ENCODE measurements at regions of chr15 and their contacts with region 1.

Region 1: GRCh38 chr15:38354315-38354929 is 99.5 kb upstream of the FAM98B start:
- DNase-seq: peak; percentile 16
- ATAC-seq: peak; percentile 65
- H3K4me3 Mint-ChIP-seq: no peak overlapping the region
- H3K27ac Mint-ChIP-seq: no peak overlapping the region
- H3K4me1 Mint-ChIP-seq: no peaks in the 10 kb centered on the region
- H3K27me3 Mint-ChIP-seq: no peaks in the 10 kb centered on the region
- CTCF ChIP-seq: no peak

Region 2: DNA sequence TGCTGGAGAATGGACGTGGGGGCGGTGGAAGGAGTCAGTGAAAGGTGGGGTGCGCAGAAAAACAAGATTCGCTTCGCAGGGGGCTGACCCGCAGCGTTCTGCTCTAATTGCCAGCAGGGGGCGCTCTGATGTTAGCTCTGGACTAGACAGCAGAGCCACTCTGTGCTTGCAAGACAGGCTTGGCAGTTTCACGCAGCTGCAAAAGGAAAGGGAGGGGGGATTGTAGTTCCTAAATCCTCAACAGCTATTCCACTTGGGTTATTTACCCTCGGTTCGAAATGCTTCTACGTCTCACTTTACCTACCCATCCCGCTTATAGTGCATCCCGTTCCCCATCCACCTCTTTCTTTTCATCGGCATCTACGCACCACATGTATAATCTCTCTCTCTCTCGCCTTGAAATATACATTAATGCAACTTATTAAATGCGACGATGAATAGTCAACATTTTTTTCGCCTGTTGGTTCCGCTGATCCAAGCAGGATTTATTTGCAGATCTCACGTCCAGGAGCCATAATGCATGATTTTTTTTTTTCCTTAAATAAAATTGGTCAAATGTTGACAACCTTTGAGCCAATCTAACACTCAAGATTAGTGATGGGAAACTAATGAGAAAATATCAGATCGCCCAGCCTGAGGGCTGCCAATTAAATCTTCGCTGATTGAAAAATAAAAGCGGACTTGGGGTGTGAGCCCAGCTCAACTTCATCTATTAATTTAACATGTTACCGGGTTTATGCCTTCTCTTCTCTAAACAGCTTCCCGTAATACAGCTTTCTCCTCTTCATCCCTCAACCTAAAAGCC is 1470.5 kb before region 1 on chr15:
- CTCF ChIA-PET with region 1: no interaction called
- POLR2A ChIA-PET with region 1: no interaction called
- intact Hi-C with region 1: loop called (anchors 5 kb)
- DNase-seq: peak; percentile 23
- ATAC-seq: no peak
- H3K4me3 Mint-ChIP-seq: no peak overlapping the region
- H3K27ac Mint-ChIP-seq: no peak overlapping the region
- H3K4me1 Mint-ChIP-seq: peaks cover 4% of the 10 kb centered on the region
- H3K27me3 Mint-ChIP-seq: peaks cover 85% of the 10 kb centered on the region
- CTCF ChIP-seq: no peak

Region 3: DNA sequence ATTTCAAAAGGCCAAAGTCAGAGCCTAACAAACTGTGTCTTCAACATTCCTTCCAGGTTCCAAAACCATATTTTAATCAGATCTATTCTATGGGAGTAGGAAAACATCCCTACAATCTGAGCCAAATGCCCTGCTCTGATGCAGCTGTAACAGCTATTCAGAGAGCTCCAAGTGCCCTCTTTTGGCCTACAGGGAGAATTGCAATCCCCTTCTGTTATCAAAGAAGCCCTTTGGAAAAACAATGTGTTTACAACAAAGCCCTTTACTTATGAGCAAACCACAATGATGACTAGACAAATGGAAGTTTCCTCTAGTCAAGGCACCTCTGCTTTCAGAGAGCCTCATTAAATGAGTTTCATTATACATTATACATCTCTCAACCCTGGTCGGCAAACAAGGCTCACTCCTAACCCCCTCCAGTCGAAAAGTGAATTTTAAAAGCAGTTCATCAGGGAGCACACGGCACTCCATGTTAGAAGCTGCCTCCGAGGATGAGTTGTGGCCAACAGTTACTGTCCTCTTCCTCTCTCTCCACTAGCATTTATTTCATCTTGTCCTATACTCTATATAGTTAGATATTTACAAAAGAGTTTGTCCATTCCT is 462.6 kb before region 1 on chr15:
- CTCF ChIA-PET with region 1: no interaction called
- POLR2A ChIA-PET with region 1: no interaction called
- intact Hi-C with region 1: loop called (anchors 10 kb)
- DNase-seq: no peak
- ATAC-seq: no peak
- H3K4me3 Mint-ChIP-seq: no peak overlapping the region
- H3K27ac Mint-ChIP-seq: no peak overlapping the region
- H3K4me1 Mint-ChIP-seq: no peaks in the 10 kb centered on the region
- H3K27me3 Mint-ChIP-seq: peaks cover 8% of the 10 kb centered on the region
- CTCF ChIP-seq: no peak

Region 4: DNA sequence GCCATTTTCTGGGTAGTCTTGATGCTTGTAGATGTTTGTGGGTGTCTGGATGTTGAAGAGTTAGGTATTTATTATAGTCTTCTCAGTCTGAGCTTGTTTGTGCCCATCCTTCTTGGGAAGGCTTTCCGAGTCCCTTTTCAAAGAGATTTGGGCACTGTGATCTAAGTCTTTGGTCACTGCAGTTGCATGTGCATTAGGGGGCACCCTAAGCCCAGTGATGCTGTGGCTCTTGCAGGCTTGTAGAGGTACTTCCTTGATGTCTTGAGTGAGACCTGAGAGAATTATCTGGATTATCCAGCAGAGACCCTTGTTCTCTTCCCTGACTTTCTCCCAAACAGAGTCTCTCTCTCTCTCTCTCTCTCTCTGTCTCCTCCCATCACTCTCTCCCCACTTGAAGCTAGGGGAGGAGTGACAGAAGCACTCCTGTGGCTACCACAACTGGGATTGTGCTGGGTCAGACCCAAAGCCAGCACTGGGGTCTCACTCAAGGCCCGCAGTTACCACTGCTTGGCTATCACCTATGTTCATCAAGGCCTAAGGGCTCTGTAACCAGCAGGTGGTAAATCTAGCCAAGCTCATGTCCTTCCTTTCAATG is 351.4 kb before region 1 on chr15:
- CTCF ChIA-PET with region 1: interaction called, 8 read pairs
- POLR2A ChIA-PET with region 1: no interaction called
- intact Hi-C with region 1: loop called (anchors 1 kb)
- DNase-seq: no peak
- ATAC-seq: no peak
- H3K4me3 Mint-ChIP-seq: no peak overlapping the region
- H3K27ac Mint-ChIP-seq: no peak overlapping the region
- H3K4me1 Mint-ChIP-seq: no peaks in the 10 kb centered on the region
- H3K27me3 Mint-ChIP-seq: peaks cover 6% of the 10 kb centered on the region
- CTCF ChIP-seq: no peak

Region 5: GRCh38 chr15:38389924-38390542 is 35.6 kb after region 1 on chr15:
- CTCF ChIA-PET with region 1: interaction called, 4 read pairs
- POLR2A ChIA-PET with region 1: no interaction called
- intact Hi-C with region 1: loop called (anchors 2 kb)
- DNase-seq: peak; percentile 20
- ATAC-seq: peak; percentile 67
- H3K4me3 Mint-ChIP-seq: no peak overlapping the region
- H3K27ac Mint-ChIP-seq: no peak overlapping the region
- H3K4me1 Mint-ChIP-seq: no peaks in the 10 kb centered on the region
- H3K27me3 Mint-ChIP-seq: peaks cover 13% of the 10 kb centered on the region
- CTCF ChIP-seq: peak; percentile 38

Measured in activated B cell treated with CpG ODN at 0.5 μM for 24 hours (primary cell).